HCT116 (cell line): ENCODE measurements at regions of chr6 and their contacts with region 1.

Region 1: DNA sequence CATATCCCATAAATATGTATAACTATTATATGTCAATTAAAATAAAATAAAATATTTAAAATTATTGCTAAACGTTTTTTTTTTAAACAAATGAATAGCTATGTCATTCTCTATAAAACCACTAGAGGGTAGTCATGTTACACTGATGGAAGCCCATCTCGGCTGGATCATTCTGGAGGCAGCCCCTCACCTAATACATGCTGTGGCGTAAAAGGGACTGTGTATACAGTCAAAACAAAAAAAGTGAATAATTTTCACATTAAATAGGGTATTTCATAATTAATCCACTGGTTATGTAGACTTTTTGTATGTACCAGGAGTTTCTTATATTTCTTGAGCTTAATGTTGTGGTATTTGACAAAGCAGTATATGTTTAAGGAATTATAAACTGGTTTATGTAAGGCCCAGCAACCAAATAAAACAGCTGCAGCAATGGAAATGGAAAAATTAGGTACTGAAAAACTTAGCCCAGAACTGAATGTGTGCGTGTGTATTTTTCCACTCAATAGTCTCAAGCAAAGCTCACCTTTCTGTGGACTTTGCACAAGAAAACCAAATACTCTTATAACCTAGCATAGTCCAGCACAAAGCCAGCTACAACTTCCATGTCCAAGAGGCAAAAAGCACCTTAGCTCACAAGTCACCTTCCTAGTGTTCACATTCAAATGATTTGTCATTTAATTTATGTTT is 81.7 kb downstream of the COL9A1 start:
- DNase-seq: no peak
- ATAC-seq: peak; percentile 71
- H3K4me3 ChIP-seq: no peak overlapping the region
- H3K27ac ChIP-seq: no peak overlapping the region
- H3K4me1 ChIP-seq: no peaks in the 10 kb centered on the region
- H3K27me3 ChIP-seq: peaks cover 52% of the 10 kb centered on the region
- CTCF ChIP-seq: peak; percentile 51 to 61 (median 55); a peak in 4 of 6 replicates
- POLR2A ChIP-seq: no peak
- RAD21 ChIP-seq: peak; percentile 75

Region 2: DNA sequence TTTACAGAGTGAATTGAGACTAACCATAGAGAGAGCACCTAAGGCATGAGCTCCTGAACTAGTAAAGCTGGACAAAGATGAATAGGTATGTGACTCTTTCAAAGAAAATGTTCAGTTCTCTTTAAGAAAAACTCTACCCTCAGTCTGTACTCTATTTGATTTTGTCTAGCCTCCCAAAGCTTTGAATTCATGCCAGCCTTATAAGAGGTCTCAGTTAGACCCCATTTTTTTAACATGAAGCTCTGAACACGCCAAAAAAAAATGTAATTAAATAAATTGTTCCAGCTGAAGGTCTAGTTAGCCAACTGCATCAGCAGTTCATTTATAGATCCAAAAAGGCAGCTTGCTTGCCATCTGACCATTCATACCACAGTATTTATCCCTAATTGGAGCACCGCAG is 10.1 kb after region 1 on chr6:
- CTCF ChIA-PET with region 1: interaction called, 23 read pairs
- POLR2A ChIA-PET with region 1: interaction called, 5 read pairs
- RAD21 ChIA-PET with region 1: no interaction called
- intact Hi-C with region 1: no loop called
- DNase-seq: no peak
- ATAC-seq: no peak
- H3K4me3 ChIP-seq: no peak overlapping the region
- H3K27ac ChIP-seq: no peak overlapping the region
- H3K4me1 ChIP-seq: no peaks in the 10 kb centered on the region
- H3K27me3 ChIP-seq: peaks cover 42% of the 10 kb centered on the region
- CTCF ChIP-seq: no peak
- POLR2A ChIP-seq: no peak
- RAD21 ChIP-seq: no peak

Region 3: DNA sequence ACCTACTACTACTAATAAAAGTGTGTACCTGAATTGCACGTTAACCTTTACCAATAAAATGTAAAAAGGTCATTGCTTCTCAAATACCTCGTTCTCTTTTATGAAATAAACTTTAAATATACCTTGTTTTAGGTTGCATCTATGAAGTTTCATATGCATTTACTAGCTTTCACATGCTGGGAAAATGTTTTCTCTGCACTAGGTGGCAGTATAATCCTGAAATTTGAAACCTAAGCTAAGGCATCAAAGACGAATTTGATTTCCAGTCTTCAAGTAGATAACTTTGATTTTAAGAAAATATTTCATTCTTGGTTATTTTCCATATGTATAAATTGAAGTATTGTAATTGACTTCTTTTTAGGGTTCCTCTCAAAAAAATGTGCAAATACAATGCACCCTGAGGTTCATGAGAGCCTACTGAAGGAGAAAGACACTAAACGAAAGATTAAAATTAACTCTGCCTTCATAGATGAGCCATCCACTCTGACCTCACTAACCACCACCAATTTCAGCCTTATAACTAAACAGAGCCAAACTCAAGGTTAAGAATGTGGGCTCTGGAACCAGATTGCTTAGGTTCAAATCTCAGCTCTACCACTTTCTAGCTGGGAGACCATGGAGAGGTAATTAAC is 89.0 kb after region 1 on chr6:
- CTCF ChIA-PET with region 1: interaction called, 27 read pairs
- POLR2A ChIA-PET with region 1: no interaction called
- RAD21 ChIA-PET with region 1: interaction called in 1 of 2 experiments, 3 read pairs
- intact Hi-C with region 1: no loop called
- DNase-seq: peak; percentile 40
- ATAC-seq: no peak
- H3K4me3 ChIP-seq: no peak overlapping the region
- H3K27ac ChIP-seq: no peak overlapping the region
- H3K4me1 ChIP-seq: peaks cover 0 to 8% of the 10 kb centered on the region in 2 experiments; a peak in 2 of 4 replicates
- H3K27me3 ChIP-seq: peaks cover 73% of the 10 kb centered on the region
- CTCF ChIP-seq: peak; percentile 60 to 75 (median 64); a peak in 5 of 6 replicates
- POLR2A ChIP-seq: no peak
- RAD21 ChIP-seq: peak; percentile 72

Region 4: GRCh38 chr6:70520575-70520974 is 299.4 kb after region 1 on chr6:
- CTCF ChIA-PET with region 1: interaction called, 7 read pairs
- POLR2A ChIA-PET with region 1: no interaction called
- RAD21 ChIA-PET with region 1: interaction called in 1 of 2 experiments, 3 read pairs
- intact Hi-C with region 1: loop called (anchors 10 kb)
- DNase-seq: no peak
- ATAC-seq: peak; percentile 55; the same call in 1 of the 2 replicates
- H3K4me3 ChIP-seq: no peak overlapping the region
- H3K27ac ChIP-seq: no peak overlapping the region
- H3K4me1 ChIP-seq: no peaks in the 10 kb centered on the region
- H3K27me3 ChIP-seq: no peaks in the 10 kb centered on the region
- CTCF ChIP-seq: peak; percentile 35 to 47 (median 37); a peak in 3 of 6 replicates
- POLR2A ChIP-seq: no peak
- RAD21 ChIP-seq: peak; percentile 59

Region 5: GRCh38 chr6:70884074-70884983 is 663.2 kb after region 1 on chr6:
- CTCF ChIA-PET with region 1: interaction called, 16 read pairs
- POLR2A ChIA-PET with region 1: no interaction called
- RAD21 ChIA-PET with region 1: interaction called, 3 to 7 read pairs
- intact Hi-C with region 1: loop called (anchors 2 kb)
- DNase-seq: peak; percentile 32
- ATAC-seq: peak; percentile 98
- H3K4me3 ChIP-seq: no peak overlapping the region
- H3K27ac ChIP-seq: no peak overlapping the region
- H3K4me1 ChIP-seq: no peaks in the 10 kb centered on the region
- H3K27me3 ChIP-seq: no peaks in the 10 kb centered on the region
- CTCF ChIP-seq: peak; percentile 80 to 90 (median 90)
- POLR2A ChIP-seq: no peak
- RAD21 ChIP-seq: peak; percentile 86

Region 6: GRCh38 chr6:71012866-71013469 is 791.8 kb after region 1 on chr6:
- CTCF ChIA-PET with region 1: interaction called, 8 read pairs
- POLR2A ChIA-PET with region 1: no interaction called
- RAD21 ChIA-PET with region 1: no interaction called
- intact Hi-C with region 1: loop called (anchors 2 kb)
- DNase-seq: peak; percentile 42
- ATAC-seq: peak; percentile 94
- H3K4me3 ChIP-seq: no peak overlapping the region
- H3K27ac ChIP-seq: no peak overlapping the region
- H3K4me1 ChIP-seq: no peaks in the 10 kb centered on the region
- H3K27me3 ChIP-seq: no peaks in the 10 kb centered on the region; the same call in 1 of the 2 replicates
- CTCF ChIP-seq: peak; percentile 51 to 90 (median 85); a peak in 5 of 6 replicates
- POLR2A ChIP-seq: no peak
- RAD21 ChIP-seq: peak; percentile 68

Region 7: GRCh38 chr6:71072508-71072907 is 851.3 kb after region 1 on chr6:
- CTCF ChIA-PET with region 1: no interaction called
- POLR2A ChIA-PET with region 1: no interaction called
- RAD21 ChIA-PET with region 1: no interaction called
- intact Hi-C with region 1: no loop called
- DNase-seq: no peak
- ATAC-seq: no peak
- H3K4me3 ChIP-seq: no peak overlapping the region
- H3K27ac ChIP-seq: no peak overlapping the region
- H3K4me1 ChIP-seq: no peaks in the 10 kb centered on the region
- H3K27me3 ChIP-seq: no peaks in the 10 kb centered on the region; the same call in 1 of the 2 replicates
- CTCF ChIP-seq: no peak
- POLR2A ChIP-seq: no peak
- RAD21 ChIP-seq: no peak